A673 (cell line): ENCODE measurements at regions of chr9 and their contacts with region 1.

Region 1: GRCh38 chr9:116627425-116627824 is 59.7 kb upstream of the TRIM32 start:
- DNase-seq: no peak
- H3K4me3 ChIP-seq: no peak overlapping the region
- H3K27ac ChIP-seq: no peak overlapping the region
- H3K4me1 ChIP-seq: peaks cover 26% of the 10 kb centered on the region
- H3K27me3 ChIP-seq: no peaks in the 10 kb centered on the region
- CTCF ChIP-seq: no peak

Region 2: DNA sequence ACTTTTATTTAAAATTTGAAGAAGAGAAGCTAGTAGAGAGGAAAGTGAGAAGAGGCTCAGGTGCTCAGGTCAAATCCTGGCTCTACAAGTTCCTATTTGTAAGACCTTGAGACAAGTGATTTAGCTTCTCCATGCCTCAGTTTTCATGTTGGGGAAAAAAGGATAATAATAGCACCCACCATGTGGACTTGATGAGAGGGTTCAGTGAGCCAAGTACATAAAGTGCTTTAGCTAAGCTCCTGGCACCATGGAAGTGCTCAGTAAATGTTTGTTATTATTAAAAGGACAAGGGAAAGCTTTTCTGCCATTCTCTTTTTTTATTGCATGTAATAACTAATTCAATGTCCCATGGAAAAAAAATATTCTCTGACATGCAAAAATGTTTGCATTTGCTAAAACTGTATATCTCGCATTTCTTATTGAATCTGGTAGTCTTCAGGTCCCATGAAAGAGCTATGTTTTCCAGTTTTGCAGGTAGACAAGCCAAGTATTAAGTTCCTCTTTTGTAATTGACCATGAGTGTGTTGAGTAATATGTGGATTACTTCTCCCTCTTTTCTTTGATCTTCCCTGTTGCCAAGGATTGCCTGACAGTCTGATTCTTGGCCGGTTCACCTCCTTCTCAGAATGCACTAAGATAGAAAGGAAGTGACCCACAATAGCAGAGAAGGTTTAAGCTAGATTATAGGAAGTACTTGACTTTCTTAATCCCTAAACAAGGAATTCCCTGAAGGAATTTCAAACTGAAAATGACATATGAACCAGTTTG is 14.1 kb after region 1 on chr9:
- CTCF ChIA-PET with region 1: interaction called, 11 read pairs
- POLR2A ChIA-PET with region 1: no interaction called
- intact Hi-C with region 1: no loop called
- DNase-seq: no peak
- H3K4me3 ChIP-seq: no peak overlapping the region
- H3K27ac ChIP-seq: no peak overlapping the region
- H3K4me1 ChIP-seq: no peaks in the 10 kb centered on the region
- H3K27me3 ChIP-seq: no peaks in the 10 kb centered on the region
- CTCF ChIP-seq: no peak